ENCODE measurements at regions of chr19 and their contacts with region 1.

Region 1: DNA sequence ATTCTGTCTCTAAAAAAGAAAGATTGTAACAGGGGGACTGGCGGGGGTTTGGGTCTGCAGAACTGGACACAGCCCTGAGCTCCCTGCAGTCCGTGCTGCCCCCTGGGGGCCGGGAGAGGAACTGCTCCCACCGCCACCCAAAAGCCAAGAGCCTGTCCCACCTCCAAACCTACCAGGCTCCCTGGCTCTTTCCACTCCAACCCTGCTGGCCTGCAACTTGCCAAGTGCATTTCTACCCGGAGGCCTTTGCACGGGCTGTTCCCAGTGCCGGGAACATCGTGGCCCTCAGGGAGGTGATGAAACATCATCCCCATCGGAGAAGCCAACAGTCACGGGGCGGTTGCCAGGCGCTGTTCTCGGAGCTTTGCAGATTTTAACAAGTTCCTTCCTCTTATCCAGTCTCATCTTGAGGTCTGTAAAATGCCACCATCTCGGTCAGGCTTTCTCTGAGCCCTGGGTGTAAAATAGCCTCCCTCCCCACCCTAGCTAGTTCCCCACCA is 50.7 kb downstream of the SMIM24 start:
- DNase-seq: peak; percentile 84 to 94 (median 91)
- H3K4me3 ChIP-seq: no peak overlapping the region
- H3K27ac ChIP-seq: no peak overlapping the region
- H3K4me1 ChIP-seq: peaks cover 15% of the 10 kb centered on the region
- H3K27me3 ChIP-seq: no peaks in the 10 kb centered on the region
- CTCF ChIP-seq: peak; percentile 94 to 97 (median 96)
- EP300 ChIP-seq: peak; percentile 98
- POLR2A ChIP-seq: no peak

Region 2: DNA sequence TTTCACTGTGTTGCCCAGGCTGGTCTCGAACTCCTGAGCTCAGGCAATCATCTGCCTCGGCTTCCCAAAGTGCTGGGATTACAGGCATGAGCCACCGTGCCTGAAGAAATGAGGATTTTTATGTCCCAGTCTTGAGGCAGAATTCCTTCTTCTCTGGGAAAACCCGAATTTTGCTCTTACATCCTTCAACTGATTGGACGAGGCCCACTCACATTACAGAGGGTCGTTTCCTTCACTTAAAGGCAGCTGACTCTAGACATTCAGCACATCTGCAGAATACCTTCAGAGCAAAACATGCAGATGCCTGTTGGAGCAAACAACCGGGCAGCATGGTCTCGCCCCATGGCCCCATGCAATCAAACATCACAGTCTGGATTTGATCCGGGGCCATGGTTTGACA is 99.6 kb before region 1 on chr19:
- intact Hi-C with region 1: loop called (anchors 2 to 10 kb)
- DNase-seq: no peak
- H3K4me3 ChIP-seq: no peak overlapping the region
- H3K27ac ChIP-seq: no peak overlapping the region
- H3K4me1 ChIP-seq: peaks cover under 1% of the 10 kb centered on the region
- H3K27me3 ChIP-seq: no peaks in the 10 kb centered on the region
- CTCF ChIP-seq: no peak
- EP300 ChIP-seq: no peak
- POLR2A ChIP-seq: no peak

Region 3: GRCh38 chr19:3336680-3337523 is 92.7 kb before region 1 on chr19:
- intact Hi-C with region 1: loop called in 3 of 4 experiments (anchors 5 to 10 kb)
- DNase-seq: peak; percentile 93 to 97 (median 95)
- H3K4me3 ChIP-seq: no peak overlapping the region
- H3K27ac ChIP-seq: peak overlapping the region; percentile 18 to 90
- H3K4me1 ChIP-seq: peaks cover 18% of the 10 kb centered on the region
- H3K27me3 ChIP-seq: no peaks in the 10 kb centered on the region
- CTCF ChIP-seq: peak in 1 of 3 donors; percentile 32
- EP300 ChIP-seq: peak; percentile 76
- POLR2A ChIP-seq: peak; percentile 41

Region 4: DNA sequence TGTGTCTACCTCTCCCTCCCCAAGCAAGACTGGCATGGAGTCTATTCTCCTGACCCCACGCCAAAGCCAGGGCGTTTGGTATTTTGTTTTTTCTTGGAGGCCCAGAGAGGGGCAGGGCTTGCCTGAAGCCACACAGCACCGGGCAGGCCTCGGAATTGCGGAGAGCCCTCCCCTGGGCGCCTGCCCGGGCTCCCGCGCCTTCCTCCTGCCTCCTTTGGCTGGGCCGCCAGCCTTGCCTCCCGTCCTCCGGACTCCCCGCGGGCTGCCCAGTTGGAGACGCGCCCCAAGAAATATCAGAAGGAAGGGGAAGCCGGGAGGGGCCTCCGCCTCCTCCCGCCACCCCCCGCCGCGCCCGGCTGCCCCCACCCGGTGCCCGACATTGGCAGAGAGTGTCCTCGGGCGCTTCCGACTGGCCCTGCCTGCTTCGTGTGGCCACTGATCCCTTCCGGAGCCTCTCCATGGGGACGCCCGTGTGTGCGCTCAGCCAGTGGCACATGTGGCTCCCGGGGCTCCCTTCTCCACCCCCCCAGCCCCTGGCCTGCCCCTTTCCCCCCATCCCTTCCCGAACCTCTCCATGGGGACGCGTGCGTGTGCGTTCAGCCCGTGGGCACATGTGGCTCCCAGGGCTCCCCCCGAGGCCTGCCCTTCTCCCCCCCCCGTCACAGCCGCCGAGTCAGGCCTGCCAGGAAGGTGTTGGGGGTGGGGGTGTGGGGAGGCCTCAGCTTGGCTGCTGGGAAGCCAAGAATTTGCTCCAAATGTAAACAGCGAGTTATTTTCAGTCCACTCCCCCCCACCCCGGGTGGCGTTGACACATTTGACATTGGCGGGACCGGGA is 25.9 kb before region 1 on chr19:
- intact Hi-C with region 1: loop called in 1 of 4 experiments (anchors 2 kb)
- DNase-seq: peak; percentile 93 to 97 (median 95)
- H3K4me3 ChIP-seq: peak overlapping the region; percentile 61
- H3K27ac ChIP-seq: peak overlapping the region; percentile 97 to 100
- H3K4me1 ChIP-seq: peaks cover 12% of the 10 kb centered on the region
- H3K27me3 ChIP-seq: no peaks in the 10 kb centered on the region
- CTCF ChIP-seq: no peak
- EP300 ChIP-seq: peak; percentile 90
- POLR2A ChIP-seq: peak; percentile 54

Measured in ovary (tissue), 10 donors.